ENCODE measurements at regions of chr17 and their contacts with region 1.

Region 1: GRCh38 chr17:63859257-63859656 is 14.2 kb downstream of the CSH2 start:
- DNase-seq: no peak
- ATAC-seq: no peak
- H3K4me3 Mint-ChIP-seq: no peak overlapping the region
- H3K27ac Mint-ChIP-seq: no peak overlapping the region
- H3K4me1 Mint-ChIP-seq: no peaks in the 10 kb centered on the region
- H3K27me3 Mint-ChIP-seq: no peaks in the 10 kb centered on the region

Region 2: GRCh38 chr17:63332286-63332685 is 527.0 kb before region 1 on chr17:
- CTCF ChIA-PET with region 1: no interaction called
- POLR2A ChIA-PET with region 1: no interaction called
- intact Hi-C with region 1: no loop called
- DNase-seq: no peak
- ATAC-seq: no peak
- H3K4me3 Mint-ChIP-seq: no peak overlapping the region
- H3K27ac Mint-ChIP-seq: no peak overlapping the region
- H3K4me1 Mint-ChIP-seq: no peaks in the 10 kb centered on the region
- H3K27me3 Mint-ChIP-seq: no peaks in the 10 kb centered on the region

Region 3: GRCh38 chr17:63848834-63849700 is 10.2 kb before region 1 on chr17:
- CTCF ChIA-PET with region 1: interaction called, 22 read pairs
- POLR2A ChIA-PET with region 1: no interaction called
- intact Hi-C with region 1: no loop called
- DNase-seq: peak; percentile 99
- ATAC-seq: peak; percentile 95
- H3K4me3 Mint-ChIP-seq: peak overlapping the region; percentile 43
- H3K27ac Mint-ChIP-seq: peak overlapping the region; percentile 93
- H3K4me1 Mint-ChIP-seq: peaks cover 20% of the 10 kb centered on the region
- H3K27me3 Mint-ChIP-seq: no peaks in the 10 kb centered on the region

Region 4: GRCh38 chr17:63881876-63882601 is 22.8 kb after region 1 on chr17 and contains the start of gene GH2:
- CTCF ChIA-PET with region 1: interaction called, 18 read pairs
- POLR2A ChIA-PET with region 1: no interaction called
- intact Hi-C with region 1: loop called in 1 of 2 experiments (anchors 1 kb)
- DNase-seq: peak; percentile 77
- ATAC-seq: peak; percentile 96
- H3K4me3 Mint-ChIP-seq: no peak within 1 kb of the TSS
- H3K27ac Mint-ChIP-seq: no peak within 1 kb of the TSS
- H3K4me1 Mint-ChIP-seq: no peaks in the 10 kb centered on the region
- H3K27me3 Mint-ChIP-seq: no peaks in the 10 kb centered on the region
- total RNA-seq, gene GH2: not detected

Region 5: GRCh38 chr17:63904316-63904715 is 45.1 kb after region 1 on chr17:
- CTCF ChIA-PET with region 1: interaction called, 11 read pairs
- POLR2A ChIA-PET with region 1: no interaction called
- intact Hi-C with region 1: no loop called
- DNase-seq: no peak
- ATAC-seq: no peak
- H3K4me3 Mint-ChIP-seq: no peak overlapping the region
- H3K27ac Mint-ChIP-seq: no peak overlapping the region
- H3K4me1 Mint-ChIP-seq: peaks cover 12% of the 10 kb centered on the region
- H3K27me3 Mint-ChIP-seq: peaks cover 7% of the 10 kb centered on the region

Region 6: GRCh38 chr17:65750631-65751117 is 1891.4 kb after region 1 on chr17:
- CTCF ChIA-PET with region 1: no interaction called
- POLR2A ChIA-PET with region 1: no interaction called
- intact Hi-C with region 1: no loop called
- DNase-seq: peak; percentile 67
- ATAC-seq: peak; percentile 72
- H3K4me3 Mint-ChIP-seq: no peak overlapping the region
- H3K27ac Mint-ChIP-seq: no peak overlapping the region
- H3K4me1 Mint-ChIP-seq: peaks cover 22% of the 10 kb centered on the region
- H3K27me3 Mint-ChIP-seq: peaks cover 6% of the 10 kb centered on the region

Measured in activated CD4-positive, alpha-beta T cell treated with anti-CD3 and anti-CD28 coated beads for 36 hours (primary cell).